ENCODE measurements at regions of chr5 and their contacts with region 1.

Region 1: DNA sequence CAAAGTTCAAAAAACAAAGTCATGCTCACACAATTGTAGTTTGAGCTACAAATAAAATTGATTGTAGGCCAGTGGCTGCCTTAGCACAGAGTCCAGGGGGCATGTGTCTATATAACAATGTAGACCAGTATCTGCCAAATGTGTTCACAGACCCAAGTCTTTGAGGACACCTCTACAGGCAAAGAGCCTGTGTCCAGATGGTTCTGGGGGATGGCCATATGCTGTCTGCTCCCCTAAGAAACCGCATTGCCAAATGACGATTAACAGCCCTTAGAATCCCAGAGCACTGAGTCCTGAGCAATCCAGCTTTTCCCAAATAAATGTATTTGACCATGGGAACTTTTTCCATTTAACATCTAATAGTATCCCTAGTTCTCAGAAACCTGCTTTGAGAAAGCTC is 169.6 kb downstream of the ADCY2 start:
- DNase-seq: no peak
- H3K4me3 ChIP-seq: no peak overlapping the region
- H3K27ac ChIP-seq: no peak overlapping the region
- H3K4me1 ChIP-seq: no peaks in the 10 kb centered on the region
- CTCF ChIP-seq: no peak

Region 2: DNA sequence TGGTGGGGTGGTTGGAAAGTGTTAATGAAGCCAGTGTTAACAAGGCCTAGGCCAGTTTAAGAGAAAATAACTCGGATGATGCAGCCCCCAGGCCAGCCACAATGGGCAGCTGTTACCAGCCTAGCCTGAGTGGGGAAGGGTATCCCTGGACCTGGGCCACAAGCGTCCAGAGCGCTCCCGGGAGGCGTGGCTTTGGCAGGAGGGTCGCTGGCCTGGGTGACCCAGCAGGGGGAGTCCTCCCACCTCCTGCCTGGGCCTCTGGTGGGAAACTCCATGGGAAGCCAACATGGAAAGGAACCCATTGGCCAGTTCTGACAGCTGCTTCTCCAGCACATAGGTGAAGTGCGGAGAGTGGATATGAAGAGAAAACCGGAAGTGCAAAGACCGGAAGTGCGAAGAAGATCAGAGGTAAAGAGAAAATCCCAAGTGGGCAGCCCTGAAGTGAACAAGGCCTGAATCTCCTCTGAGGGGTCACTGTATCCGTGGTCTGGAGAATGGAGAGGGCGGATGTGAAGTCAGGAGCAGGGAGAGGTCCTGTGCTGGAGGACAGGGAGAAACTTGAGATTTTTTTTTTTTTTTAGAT is 90.6 kb before region 1 on chr5:
- CTCF ChIA-PET with region 1: no interaction called
- POLR2A ChIA-PET with region 1: no interaction called
- intact Hi-C with region 1: no loop called
- DNase-seq: no peak
- H3K4me3 ChIP-seq: no peak overlapping the region
- H3K27ac ChIP-seq: no peak overlapping the region
- H3K4me1 ChIP-seq: no peaks in the 10 kb centered on the region
- CTCF ChIP-seq: no peak

Region 3: GRCh38 chr5:7576023-7576715 is 10.6 kb after region 1 on chr5:
- CTCF ChIA-PET with region 1: no interaction called
- POLR2A ChIA-PET with region 1: interaction called, 10 read pairs
- intact Hi-C with region 1: no loop called
- DNase-seq: no peak
- H3K4me3 ChIP-seq: no peak overlapping the region
- H3K27ac ChIP-seq: no peak overlapping the region
- H3K4me1 ChIP-seq: no peaks in the 10 kb centered on the region
- CTCF ChIP-seq: no peak

Measured in OCI-LY7 (cell line).